Activated T-helper 1 cell treated with anti-CD3 and anti-CD28 coated beads, Interleukin-12 subunit alpha, Interleukin-12 subunit beta, Interleukin-2, Interleukin-4 antibody, amounts not matched to agents 30 ng/mL and 10 ng/mL and 1 ng/mL, durations not matched to agents 14 hours and 24 hours and 36 hours (primary cell): ENCODE measurements at regions of chr11 and their contacts with region 1.

Region 1: GRCh38 chr11:100575870-100576705 is 111.0 kb upstream of the ARHGAP42 start:
- DNase-seq: no peak
- H3K4me3 Mint-ChIP-seq: no peak overlapping the region
- H3K27ac Mint-ChIP-seq: no peak overlapping the region
- H3K4me1 Mint-ChIP-seq: no peaks in the 10 kb centered on the region
- H3K27me3 Mint-ChIP-seq: no peaks in the 10 kb centered on the region

Region 2: GRCh38 chr11:100841711-100842407 is 265.8 kb after region 1 on chr11:
- intact Hi-C with region 1: no loop called
- DNase-seq: no peak
- H3K4me3 Mint-ChIP-seq: no peak overlapping the region
- H3K27ac Mint-ChIP-seq: no peak overlapping the region
- H3K4me1 Mint-ChIP-seq: no peaks in the 10 kb centered on the region
- H3K27me3 Mint-ChIP-seq: no peaks in the 10 kb centered on the region

Region 3: GRCh38 chr11:100855466-100856067 is 279.5 kb after region 1 on chr11:
- intact Hi-C with region 1: loop called (anchors 2 kb)
- DNase-seq: no peak
- H3K4me3 Mint-ChIP-seq: no peak overlapping the region
- H3K27ac Mint-ChIP-seq: no peak overlapping the region
- H3K4me1 Mint-ChIP-seq: no peaks in the 10 kb centered on the region
- H3K27me3 Mint-ChIP-seq: no peaks in the 10 kb centered on the region

Region 4: GRCh38 chr11:100930185-100930778 is 354.2 kb after region 1 on chr11:
- intact Hi-C with region 1: loop called (anchors 1 kb)
- DNase-seq: no peak
- H3K4me3 Mint-ChIP-seq: no peak overlapping the region
- H3K27ac Mint-ChIP-seq: no peak overlapping the region
- H3K4me1 Mint-ChIP-seq: no peaks in the 10 kb centered on the region
- H3K27me3 Mint-ChIP-seq: no peaks in the 10 kb centered on the region